CD4-positive, alpha-beta memory T cell (primary cell): ENCODE measurements at regions of chr20 and their contacts with region 1.

Region 1: GRCh38 chr20:5126512-5127203 is at the start of gene CDS2:
- DNase-seq: peak; percentile 99 to 100 (median 99)
- H3K4me3 ChIP-seq: peak within 1 kb of the TSS; percentile 72 to 82
- H3K4me3 Mint-ChIP-seq: peak within 1 kb of the TSS; percentile 88 to 97 (median 92)
- H3K27ac ChIP-seq: peak within 1 kb of the TSS; percentile 99
- H3K27ac Mint-ChIP-seq: peak within 1 kb of the TSS; percentile 87 to 99 (median 97)
- H3K4me1 ChIP-seq: peaks cover 31% of the 10 kb centered on the region
- H3K4me1 Mint-ChIP-seq: peaks cover 27 to 38% (median 31%) of the 10 kb centered on the region in 4 donors
- H3K27me3 ChIP-seq: no peaks in the 10 kb centered on the region
- H3K27me3 Mint-ChIP-seq: no peaks in the 10 kb centered on the region
- total RNA-seq, gene CDS2: 59.4 to 59.8 TPM

Region 2: GRCh38 chr20:4813863-4814695 is 312.6 kb before region 1 on chr20:
- CTCF ChIA-PET with region 1: no interaction called
- POLR2A ChIA-PET with region 1: interaction called, 11 read pairs
- intact Hi-C with region 1: no loop called
- DNase-seq: peak; percentile 86 to 92 (median 88)
- H3K4me3 ChIP-seq: peak overlapping the region; percentile 40 to 89
- H3K4me3 Mint-ChIP-seq: peak overlapping the region; percentile 90 to 97 (median 94)
- H3K27ac ChIP-seq: peak overlapping the region; percentile 98
- H3K27ac Mint-ChIP-seq: peak overlapping the region; percentile 99 to 100 (median 100)
- H3K4me1 ChIP-seq: peaks cover 89% of the 10 kb centered on the region
- H3K4me1 Mint-ChIP-seq: peaks cover 66 to 87% (median 79%) of the 10 kb centered on the region in 4 donors
- H3K27me3 ChIP-seq: no peaks in the 10 kb centered on the region
- H3K27me3 Mint-ChIP-seq: no peaks in the 10 kb centered on the region

Region 3: GRCh38 chr20:5114403-5114802 is 12.3 kb before region 1 on chr20:
- CTCF ChIA-PET with region 1: interaction called, 7 read pairs
- POLR2A ChIA-PET with region 1: interaction called, 32 read pairs
- intact Hi-C with region 1: loop called (anchors 1 kb)
- DNase-seq: no peak
- H3K4me3 ChIP-seq: no peak overlapping the region
- H3K4me3 Mint-ChIP-seq: peak overlapping the region in 5 of 8 donors; percentile 7 to 54 (median 25)
- H3K27ac ChIP-seq: no peak overlapping the region
- H3K27ac Mint-ChIP-seq: peak overlapping the region in 6 of 7 donors; percentile 41 to 98 (median 84)
- H3K4me1 ChIP-seq: peaks cover 43% of the 10 kb centered on the region
- H3K4me1 Mint-ChIP-seq: peaks cover 16 to 53% (median 33%) of the 10 kb centered on the region in 4 donors
- H3K27me3 ChIP-seq: no peaks in the 10 kb centered on the region
- H3K27me3 Mint-ChIP-seq: no peaks in the 10 kb centered on the region

Region 4: DNA sequence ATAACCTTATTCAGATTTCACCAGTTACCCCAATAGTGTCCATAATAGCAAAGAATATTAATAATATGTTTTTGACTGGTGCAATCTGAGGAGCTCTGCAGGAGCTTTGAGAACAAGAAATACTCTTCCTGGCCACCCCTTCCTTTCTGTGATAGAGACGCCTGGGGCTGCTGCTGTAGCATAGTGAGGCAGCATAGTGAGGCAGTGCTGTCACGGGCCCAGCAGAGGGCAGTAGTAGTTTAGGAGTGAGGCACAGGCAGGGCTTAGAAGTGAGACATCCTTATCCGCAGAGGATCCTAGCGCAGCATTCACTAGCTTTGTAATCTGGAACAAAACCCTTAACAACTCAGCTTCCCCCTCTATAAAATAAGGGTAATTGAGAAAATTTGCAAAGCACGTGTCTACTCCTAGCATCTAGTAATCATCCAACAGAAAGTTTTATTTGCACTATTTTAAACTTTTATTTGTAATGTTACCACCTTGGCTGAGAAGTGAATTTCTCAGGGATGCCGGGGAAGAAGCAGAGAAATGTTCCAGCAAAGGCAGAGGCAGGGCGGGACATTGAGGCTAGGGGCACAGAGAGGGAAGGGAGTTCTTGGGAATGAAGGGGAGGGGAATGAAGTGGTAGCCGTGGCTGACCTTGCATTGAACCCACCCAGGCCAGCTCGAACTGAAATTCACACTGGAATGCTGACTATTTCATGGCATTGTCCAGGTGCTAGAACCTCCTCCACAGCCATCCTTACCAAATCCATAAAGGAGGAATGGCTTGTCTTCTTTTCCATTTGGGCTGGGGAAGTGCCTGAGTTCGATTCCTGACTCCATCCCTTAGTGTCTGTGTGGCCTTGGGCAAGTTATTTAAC is 78.9 kb after region 1 on chr20:
- CTCF ChIA-PET with region 1: interaction called, 8 read pairs
- POLR2A ChIA-PET with region 1: interaction called, 4 read pairs
- intact Hi-C with region 1: loop called (anchors 5 kb)
- DNase-seq: peak; percentile 49 to 64 (median 56)
- H3K4me3 ChIP-seq: no peak overlapping the region
- H3K4me3 Mint-ChIP-seq: no peak overlapping the region
- H3K27ac ChIP-seq: no peak overlapping the region
- H3K27ac Mint-ChIP-seq: peak overlapping the region in 1 of 7 donors; percentile 74
- H3K4me1 ChIP-seq: no peaks in the 10 kb centered on the region
- H3K4me1 Mint-ChIP-seq: peaks cover 0 to 6% (median 0%) of the 10 kb centered on the region in 4 donors
- H3K27me3 ChIP-seq: no peaks in the 10 kb centered on the region
- H3K27me3 Mint-ChIP-seq: no peaks in the 10 kb centered on the region

Region 5: GRCh38 chr20:5448449-5449118 is 321.9 kb after region 1 on chr20:
- CTCF ChIA-PET with region 1: interaction called, 20 read pairs
- POLR2A ChIA-PET with region 1: no interaction called
- intact Hi-C with region 1: no loop called
- DNase-seq: peak; percentile 15 to 36 (median 20)
- H3K4me3 ChIP-seq: no peak overlapping the region
- H3K4me3 Mint-ChIP-seq: no peak overlapping the region
- H3K27ac ChIP-seq: no peak overlapping the region
- H3K27ac Mint-ChIP-seq: no peak overlapping the region
- H3K4me1 ChIP-seq: no peaks in the 10 kb centered on the region
- H3K4me1 Mint-ChIP-seq: peaks cover 0 to 2% (median 0%) of the 10 kb centered on the region in 4 donors
- H3K27me3 ChIP-seq: no peaks in the 10 kb centered on the region
- H3K27me3 Mint-ChIP-seq: peaks cover 17 to 25% of the 10 kb centered on the region in 2 donors